Activated CD4-positive, alpha-beta T cell treated with anti-CD3 and anti-CD28 coated beads, Interleukin-2, amount 10 ng/mL, durations not matched to agents 24 days and 14 days (primary cell): ENCODE measurements at regions of chr15 and their contacts with region 1.

Region 1: GRCh38 chr15:88331280-88331679 is 74.7 kb upstream of the NTRK3 start:
- DNase-seq: peak; percentile 82
- H3K4me3 Mint-ChIP-seq: no peak overlapping the region
- H3K27ac Mint-ChIP-seq: no peak overlapping the region
- H3K4me1 Mint-ChIP-seq: no peaks in the 10 kb centered on the region
- H3K27me3 Mint-ChIP-seq: peaks cover 6% of the 10 kb centered on the region

Region 2: DNA sequence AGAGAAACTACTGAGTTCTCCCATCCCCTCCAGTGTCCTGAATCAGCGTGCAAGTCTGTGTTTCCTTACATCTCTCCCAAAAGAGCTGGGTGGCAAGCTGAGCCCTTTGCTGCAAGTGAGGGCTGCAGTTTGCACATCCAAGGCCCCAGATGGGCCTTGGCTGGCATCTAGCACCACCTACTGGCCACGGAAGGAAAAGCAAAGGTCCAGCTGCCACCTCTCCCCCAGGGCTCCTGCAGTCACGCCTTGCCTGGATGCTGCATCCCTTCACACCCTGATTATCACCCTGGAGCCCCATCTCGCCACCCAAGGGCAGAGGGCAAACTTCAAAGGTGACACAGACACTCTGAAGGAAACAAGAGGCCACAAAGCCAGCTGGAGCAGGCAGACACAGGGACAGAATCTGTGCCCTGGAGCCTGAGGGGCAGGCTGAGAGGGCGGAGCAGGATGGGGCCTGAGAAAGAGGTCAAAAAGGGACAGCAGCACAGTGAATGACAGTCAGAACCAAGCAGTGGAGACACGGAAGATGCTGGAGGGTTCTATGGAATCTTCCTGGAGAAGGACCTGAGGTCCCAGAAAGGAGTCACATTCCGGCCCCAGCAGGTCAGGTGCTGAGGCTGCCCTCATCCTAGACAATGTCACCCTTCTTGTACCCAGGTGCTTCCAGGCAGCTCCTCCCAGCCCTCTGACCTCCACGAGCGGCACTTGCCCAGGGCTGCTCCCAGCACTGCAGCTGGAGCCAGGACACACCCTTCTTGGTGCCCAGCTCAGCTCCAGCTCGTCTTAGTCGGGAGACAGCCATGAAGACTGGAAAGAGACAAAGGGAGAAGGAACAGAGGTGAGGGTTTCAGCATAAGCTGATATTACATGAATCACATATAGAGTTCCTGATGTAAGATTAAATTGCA is 56.5 kb before region 1 on chr15:
- intact Hi-C with region 1: loop called (anchors 10 kb)
- DNase-seq: peak; percentile 88
- H3K4me3 Mint-ChIP-seq: no peak overlapping the region
- H3K27ac Mint-ChIP-seq: no peak overlapping the region
- H3K4me1 Mint-ChIP-seq: no peaks in the 10 kb centered on the region
- H3K27me3 Mint-ChIP-seq: peaks cover 17% of the 10 kb centered on the region

Region 3: GRCh38 chr15:88299497-88299896 is 31.8 kb before region 1 on chr15:
- intact Hi-C with region 1: no loop called
- DNase-seq: no peak
- H3K4me3 Mint-ChIP-seq: no peak overlapping the region
- H3K27ac Mint-ChIP-seq: no peak overlapping the region
- H3K4me1 Mint-ChIP-seq: no peaks in the 10 kb centered on the region
- H3K27me3 Mint-ChIP-seq: no peaks in the 10 kb centered on the region

Region 4: GRCh38 chr15:88657326-88658069 is 326.2 kb after region 1 on chr15:
- intact Hi-C with region 1: no loop called
- DNase-seq: peak; percentile 56
- H3K4me3 Mint-ChIP-seq: no peak overlapping the region
- H3K27ac Mint-ChIP-seq: no peak overlapping the region
- H3K4me1 Mint-ChIP-seq: peaks cover 10% of the 10 kb centered on the region
- H3K27me3 Mint-ChIP-seq: no peaks in the 10 kb centered on the region